Thyroid gland (tissue), 4 donors: ENCODE measurements at regions of chr12 and their contacts with region 1.

Region 1: DNA sequence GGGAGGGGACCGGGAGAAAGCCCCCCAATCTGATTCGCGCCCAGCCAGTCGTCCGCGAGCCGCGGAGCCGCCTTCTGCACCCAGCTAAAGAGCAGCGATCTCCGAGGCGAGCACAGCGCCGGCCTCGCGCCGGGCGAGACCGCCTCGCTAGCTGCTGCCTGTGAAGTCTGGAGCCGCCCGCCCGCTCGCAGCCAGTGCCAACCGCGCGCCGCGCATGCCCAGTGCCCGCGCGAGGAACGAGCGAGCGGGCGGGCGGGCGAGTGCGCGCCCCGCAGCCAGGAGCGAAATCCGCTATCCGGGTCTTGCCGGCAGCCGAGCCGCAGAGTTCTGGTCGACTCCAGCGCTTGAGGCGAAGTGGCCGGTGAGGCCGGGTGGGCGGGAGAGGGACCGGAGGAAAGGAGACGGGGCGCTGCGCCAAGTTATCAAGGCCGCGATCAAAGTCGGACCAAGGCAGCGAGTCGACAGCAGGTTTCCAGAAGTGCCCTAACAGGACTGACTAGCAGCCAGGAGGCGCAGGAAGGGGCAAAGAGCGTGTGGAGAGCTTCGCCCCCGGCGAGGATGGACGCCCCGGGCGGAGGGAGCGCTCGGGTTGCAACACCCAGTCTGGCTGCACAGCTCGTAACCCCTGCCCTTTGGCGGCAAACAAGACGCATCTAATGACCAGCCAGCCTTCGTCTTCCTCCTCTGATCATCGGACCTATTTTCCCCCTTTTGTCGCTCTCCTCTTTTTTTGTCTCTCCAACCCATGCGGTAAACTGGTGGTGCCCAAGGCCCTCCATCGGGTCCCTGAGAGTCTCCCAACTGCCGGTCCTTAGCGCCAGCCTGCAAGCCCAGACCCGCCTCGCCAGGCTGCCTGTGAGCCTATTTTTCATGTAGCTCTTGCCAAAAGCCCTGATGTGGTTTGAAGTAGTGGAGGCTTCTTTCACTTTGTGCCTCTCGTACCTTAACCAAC is at the start of gene EPS8:
- DNase-seq: peak; percentile 93 to 96
- H3K4me3 ChIP-seq: peak within 1 kb of the TSS; percentile 70 to 97 (median 70)
- H3K27ac ChIP-seq: peak within 1 kb of the TSS; percentile 88 to 95 (median 92)
- H3K4me1 ChIP-seq: peaks cover 6 to 17% of the 10 kb centered on the region in 2 donors
- H3K27me3 ChIP-seq: no peaks in the 10 kb centered on the region
- CTCF ChIP-seq: peak in 2 of 6 experiments; percentile 13 to 16
- POLR2A ChIP-seq: peak; percentile 34 to 96
- total RNA-seq, gene EPS8: 78.0 to 127 (median 110) TPM

Region 2: DNA sequence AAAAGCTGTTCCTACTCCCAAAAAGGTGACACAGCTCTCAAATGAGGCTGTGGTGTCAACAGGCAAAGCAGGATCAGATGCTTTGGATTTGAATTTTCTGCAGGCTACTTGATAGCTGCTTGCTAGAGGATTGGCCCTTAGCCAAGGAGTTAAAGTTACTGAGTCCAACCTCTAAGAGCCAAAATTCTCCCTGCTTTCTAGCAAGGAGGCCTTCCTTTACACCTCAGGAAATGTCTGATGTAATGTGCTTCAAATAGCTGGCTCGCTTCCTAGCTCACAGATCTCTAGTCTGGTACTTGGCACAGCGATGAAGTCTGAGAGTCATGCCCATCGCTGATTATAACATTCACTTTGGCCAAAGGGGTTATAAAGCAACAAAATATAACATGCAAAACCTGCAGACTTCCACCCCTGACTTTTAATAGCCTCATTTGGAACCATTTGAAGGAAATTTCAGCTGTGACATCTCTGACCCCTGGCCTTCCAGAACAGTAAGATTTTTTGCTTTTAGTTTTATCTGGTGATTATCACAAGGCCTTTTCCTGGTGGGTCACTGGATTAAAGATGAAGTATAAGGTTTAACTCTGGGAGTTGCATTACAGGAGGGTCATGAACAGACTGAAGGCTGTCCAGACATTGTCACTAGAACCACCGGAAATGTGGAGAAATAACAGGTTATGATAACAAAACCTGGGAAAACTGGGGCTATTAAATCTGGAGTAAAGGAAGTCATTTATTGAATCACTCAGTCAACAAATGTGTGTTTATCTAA is 190.0 kb before region 1 on chr12:
- intact Hi-C with region 1: loop called (anchors 10 kb)
- DNase-seq: peak; percentile 78
- H3K4me3 ChIP-seq: no peak overlapping the region
- H3K27ac ChIP-seq: peak overlapping the region; percentile 25 to 52 (median 48)
- H3K4me1 ChIP-seq: peaks cover 10 to 11% of the 10 kb centered on the region in 2 donors
- H3K27me3 ChIP-seq: no peaks in the 10 kb centered on the region
- CTCF ChIP-seq: no peak
- POLR2A ChIP-seq: no peak

Region 3: GRCh38 chr12:15712823-15713660 is 76.5 kb before region 1 on chr12:
- intact Hi-C with region 1: loop called (anchors 10 kb)
- DNase-seq: peak; percentile 80 to 82
- H3K4me3 ChIP-seq: no peak overlapping the region
- H3K27ac ChIP-seq: peak overlapping the region; percentile 28 to 81 (median 75)
- H3K4me1 ChIP-seq: peaks cover 28 to 45% of the 10 kb centered on the region in 2 donors
- H3K27me3 ChIP-seq: no peaks in the 10 kb centered on the region
- CTCF ChIP-seq: no peak
- POLR2A ChIP-seq: no peak